PC-3 (cell line): ENCODE measurements at regions of chr18 and their contacts with region 1.

Region 1: DNA sequence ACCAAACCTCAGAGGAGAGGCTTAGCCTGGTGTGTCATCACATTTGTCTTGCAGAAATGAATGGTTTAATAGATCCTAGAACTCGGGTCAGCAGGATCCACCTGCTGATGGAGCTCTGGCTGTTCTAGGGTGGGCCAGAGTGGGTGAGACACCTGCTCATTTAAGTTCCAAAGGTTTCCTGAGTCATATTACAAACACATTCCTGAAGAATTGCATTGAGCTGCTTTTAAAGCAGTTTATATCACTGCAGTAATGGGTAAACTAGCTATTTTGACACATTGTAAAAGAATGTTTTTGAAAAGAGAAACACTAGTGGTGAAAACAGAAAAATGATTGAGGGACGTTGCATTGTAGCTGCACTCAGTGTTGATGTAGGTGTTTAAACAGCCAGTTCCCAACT is 175.3 kb upstream of the TCF4 start:
- DNase-seq: peak; percentile 91
- ATAC-seq: peak; percentile 93
- H3K4me3 ChIP-seq: no peak overlapping the region
- H3K27ac ChIP-seq: peak overlapping the region; percentile 53
- H3K4me1 ChIP-seq: peaks cover 40% of the 10 kb centered on the region
- H3K27me3 ChIP-seq: no peaks in the 10 kb centered on the region
- CTCF ChIP-seq: no peak

Region 2: DNA sequence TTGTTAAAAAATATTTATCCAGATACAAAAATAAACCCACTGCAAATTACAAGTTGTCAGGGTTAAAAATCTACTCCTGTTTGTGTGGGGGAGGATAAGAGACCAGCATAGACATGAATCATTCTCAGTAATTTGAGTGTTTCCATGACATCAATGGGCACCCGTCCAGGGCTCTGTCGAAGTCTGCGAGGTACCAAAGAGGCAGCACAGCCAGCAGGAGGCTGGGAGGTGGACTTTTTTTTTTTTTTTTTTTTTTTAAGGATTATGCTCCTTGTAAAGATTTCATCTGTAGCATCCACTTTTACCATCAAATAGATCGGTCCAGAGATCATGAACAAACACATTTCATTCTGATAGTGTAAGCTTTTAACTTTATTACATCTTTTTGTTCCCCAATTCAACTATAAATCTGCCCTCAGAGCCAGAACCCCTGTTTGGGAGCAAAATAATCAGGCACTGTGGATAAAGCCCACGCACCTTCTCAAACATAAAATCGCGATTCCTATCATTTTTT is 357.3 kb before region 1 on chr18:
- CTCF ChIA-PET with region 1: no interaction called
- POLR2A ChIA-PET with region 1: interaction called, 37 read pairs
- intact Hi-C with region 1: no loop called
- DNase-seq: peak; percentile 93
- ATAC-seq: peak; percentile 88
- H3K4me3 ChIP-seq: no peak overlapping the region
- H3K27ac ChIP-seq: no peak overlapping the region
- H3K4me1 ChIP-seq: peaks cover 16% of the 10 kb centered on the region
- H3K27me3 ChIP-seq: no peaks in the 10 kb centered on the region
- CTCF ChIP-seq: no peak